ENCODE measurements at regions of chr17 and their contacts with region 1.

Region 1: DNA sequence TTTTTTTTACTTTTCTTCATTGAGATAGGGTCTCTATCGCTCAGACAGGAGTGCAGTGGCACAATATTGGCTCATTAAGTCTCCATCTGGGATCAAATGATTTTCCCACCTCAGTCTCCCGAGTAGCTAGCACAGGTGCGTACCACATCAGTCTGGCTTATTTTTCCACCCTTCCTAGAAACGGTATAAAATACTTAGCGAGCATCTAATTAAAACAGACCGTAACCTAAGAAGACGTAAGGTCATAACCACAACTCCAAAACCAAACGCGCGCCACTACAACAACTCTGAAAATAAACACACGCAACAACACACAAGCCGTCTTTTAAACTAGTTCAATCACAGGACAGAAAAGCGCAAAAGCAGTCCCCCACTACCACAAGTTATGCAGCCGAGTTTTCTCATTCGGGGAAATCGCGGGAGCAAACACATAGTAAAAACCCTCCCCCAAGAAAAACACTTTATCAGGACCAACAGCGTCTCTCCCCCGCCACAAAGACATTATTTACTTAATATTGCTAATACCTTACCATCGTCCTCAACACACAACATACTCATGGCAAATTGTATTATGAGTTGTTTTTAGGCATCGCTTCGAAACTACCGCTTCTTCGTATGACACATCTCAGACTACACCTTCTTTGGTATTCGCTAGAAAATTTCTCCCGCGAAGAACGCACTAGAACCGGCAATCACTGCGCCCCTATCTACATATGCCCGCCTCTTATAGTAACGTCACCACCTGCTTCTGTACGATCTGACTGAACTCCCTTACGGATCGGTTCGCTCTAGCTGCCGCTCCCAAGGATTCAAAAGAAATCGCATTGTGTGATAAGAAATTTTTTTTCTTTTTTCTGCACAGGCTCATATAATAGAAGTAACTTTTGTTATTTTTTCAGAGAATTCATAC is 32.8 kb downstream of the TEX14 start:
- DNase-seq: peak; percentile 99
- H3K4me3 ChIP-seq: peak overlapping the region; percentile 51
- H3K27ac ChIP-seq: peak overlapping the region; percentile 95
- H3K27me3 ChIP-seq: peaks cover 4% of the 10 kb centered on the region
- CTCF ChIP-seq: no peak

Region 2: GRCh38 chr17:58643140-58643539 is 15.9 kb before region 1 on chr17:
- CTCF ChIA-PET with region 1: no interaction called
- POLR2A ChIA-PET with region 1: interaction called, 15 read pairs
- DNase-seq: peak; percentile 42
- H3K4me3 ChIP-seq: no peak overlapping the region
- H3K27ac ChIP-seq: peak overlapping the region; percentile 3
- H3K27me3 ChIP-seq: peaks cover 2% of the 10 kb centered on the region
- CTCF ChIP-seq: no peak